Activated CD8-positive, alpha-beta T cell treated with anti-CD3 and anti-CD28 coated beads, Interleukin-2, amount 10 ng/mL, durations not matched to agents 7 days and 5 days (primary cell): ENCODE measurements at regions of chr17 and their contacts with region 1.

Region 1: DNA sequence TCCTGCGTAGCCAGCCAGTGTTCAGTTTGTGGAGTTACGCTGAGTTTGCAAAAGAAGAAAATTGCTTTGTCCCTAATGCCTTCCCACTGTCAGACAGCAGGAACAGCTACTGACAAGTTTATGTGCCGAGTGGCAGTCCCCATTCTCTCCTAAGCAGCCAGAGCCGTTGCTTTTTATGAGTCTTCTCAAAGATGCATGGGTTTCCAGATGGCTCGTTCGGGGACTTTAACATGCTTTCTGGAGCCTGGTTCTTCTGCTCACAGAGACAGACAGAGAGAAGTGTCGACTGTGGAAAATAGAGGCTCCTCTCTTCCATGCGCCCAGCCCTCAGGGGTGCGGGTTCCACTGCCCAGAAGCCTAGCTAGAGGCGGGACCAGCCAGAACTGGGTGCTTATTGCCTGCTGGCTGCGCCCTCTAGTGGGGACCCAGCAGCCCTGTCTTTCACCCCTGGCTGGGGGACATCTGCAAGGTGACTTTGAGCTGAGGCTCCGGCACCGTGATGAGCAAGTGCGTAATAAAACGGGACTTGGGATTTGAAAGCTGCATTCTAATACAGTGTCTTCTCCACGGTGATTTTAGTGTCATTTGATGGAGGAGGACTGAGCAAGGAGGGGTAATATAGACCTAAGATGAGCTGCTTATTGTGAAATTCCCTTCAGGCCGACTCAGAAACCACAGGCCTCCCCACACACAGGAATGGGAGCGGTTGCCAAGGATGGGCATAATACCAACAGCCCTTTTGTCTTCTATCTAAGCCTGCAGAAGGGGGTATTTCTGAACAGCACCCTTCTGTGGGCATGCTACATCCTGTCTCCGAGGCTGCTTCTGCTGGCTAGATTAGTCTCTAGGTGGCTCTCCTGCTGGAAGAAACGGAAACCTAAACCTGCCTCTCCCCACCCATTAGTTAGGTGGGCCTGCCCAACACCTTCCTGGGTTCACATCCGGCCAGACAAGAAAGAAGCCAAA is 73.1 kb downstream of the CCDC182 start:
- DNase-seq: peak; percentile 87
- ATAC-seq: peak; percentile 93
- H3K4me3 Mint-ChIP-seq: peak overlapping the region; percentile 66
- H3K27ac Mint-ChIP-seq: peak overlapping the region; percentile 96
- H3K4me1 Mint-ChIP-seq: peaks cover 66% of the 10 kb centered on the region
- H3K27me3 Mint-ChIP-seq: no peaks in the 10 kb centered on the region

Region 2: DNA sequence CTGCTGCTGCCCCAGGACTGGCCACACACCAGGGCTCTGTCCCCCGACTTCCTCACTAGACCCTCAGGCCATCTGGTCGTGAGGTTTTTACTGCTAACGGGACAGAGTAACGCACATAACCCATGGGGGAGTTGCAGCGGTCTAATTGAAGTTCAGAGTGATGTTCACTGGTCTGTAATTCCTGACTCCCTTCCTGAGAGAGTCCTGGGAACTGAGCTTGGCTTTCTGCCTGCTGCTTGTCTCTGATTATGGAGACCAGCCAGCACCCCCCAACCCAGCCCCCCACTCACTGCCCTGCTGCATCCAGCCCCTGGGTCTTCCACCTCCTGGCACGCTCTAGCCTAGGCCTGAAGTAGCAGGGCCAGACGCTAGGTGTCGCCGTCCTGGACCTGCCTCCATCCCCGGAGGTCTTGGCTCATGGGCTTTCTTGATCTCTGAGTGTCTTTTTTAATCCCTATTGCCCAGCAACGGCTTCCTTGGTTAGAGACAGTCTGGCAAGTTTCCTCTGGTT is 119.8 kb before region 1 on chr17:
- CTCF ChIA-PET with region 1: interaction called, 32 read pairs
- POLR2A ChIA-PET with region 1: no interaction called
- DNase-seq: peak; percentile 51
- ATAC-seq: peak; percentile 49
- H3K4me3 Mint-ChIP-seq: no peak overlapping the region
- H3K27ac Mint-ChIP-seq: peak overlapping the region; percentile 9
- H3K4me1 Mint-ChIP-seq: peaks cover 33% of the 10 kb centered on the region
- H3K27me3 Mint-ChIP-seq: no peaks in the 10 kb centered on the region

Region 3: GRCh38 chr17:57641761-57642160 is 30.2 kb before region 1 on chr17:
- CTCF ChIA-PET with region 1: interaction called, 14 read pairs
- POLR2A ChIA-PET with region 1: no interaction called
- DNase-seq: no peak
- ATAC-seq: no peak
- H3K4me3 Mint-ChIP-seq: no peak overlapping the region
- H3K27ac Mint-ChIP-seq: no peak overlapping the region
- H3K4me1 Mint-ChIP-seq: peaks cover 11% of the 10 kb centered on the region
- H3K27me3 Mint-ChIP-seq: no peaks in the 10 kb centered on the region

Region 4: GRCh38 chr17:57696050-57696449 is 24.1 kb after region 1 on chr17:
- CTCF ChIA-PET with region 1: interaction called, 15 read pairs
- POLR2A ChIA-PET with region 1: no interaction called
- DNase-seq: no peak
- ATAC-seq: no peak
- H3K4me3 Mint-ChIP-seq: no peak overlapping the region
- H3K27ac Mint-ChIP-seq: no peak overlapping the region
- H3K4me1 Mint-ChIP-seq: peaks cover 18% of the 10 kb centered on the region
- H3K27me3 Mint-ChIP-seq: no peaks in the 10 kb centered on the region

Region 5: GRCh38 chr17:57718878-57719277 is 46.9 kb after region 1 on chr17:
- CTCF ChIA-PET with region 1: no interaction called
- POLR2A ChIA-PET with region 1: no interaction called
- DNase-seq: no peak
- ATAC-seq: no peak
- H3K4me3 Mint-ChIP-seq: no peak overlapping the region
- H3K27ac Mint-ChIP-seq: no peak overlapping the region
- H3K4me1 Mint-ChIP-seq: peaks cover 6% of the 10 kb centered on the region
- H3K27me3 Mint-ChIP-seq: peaks cover 25% of the 10 kb centered on the region

Region 6: DNA sequence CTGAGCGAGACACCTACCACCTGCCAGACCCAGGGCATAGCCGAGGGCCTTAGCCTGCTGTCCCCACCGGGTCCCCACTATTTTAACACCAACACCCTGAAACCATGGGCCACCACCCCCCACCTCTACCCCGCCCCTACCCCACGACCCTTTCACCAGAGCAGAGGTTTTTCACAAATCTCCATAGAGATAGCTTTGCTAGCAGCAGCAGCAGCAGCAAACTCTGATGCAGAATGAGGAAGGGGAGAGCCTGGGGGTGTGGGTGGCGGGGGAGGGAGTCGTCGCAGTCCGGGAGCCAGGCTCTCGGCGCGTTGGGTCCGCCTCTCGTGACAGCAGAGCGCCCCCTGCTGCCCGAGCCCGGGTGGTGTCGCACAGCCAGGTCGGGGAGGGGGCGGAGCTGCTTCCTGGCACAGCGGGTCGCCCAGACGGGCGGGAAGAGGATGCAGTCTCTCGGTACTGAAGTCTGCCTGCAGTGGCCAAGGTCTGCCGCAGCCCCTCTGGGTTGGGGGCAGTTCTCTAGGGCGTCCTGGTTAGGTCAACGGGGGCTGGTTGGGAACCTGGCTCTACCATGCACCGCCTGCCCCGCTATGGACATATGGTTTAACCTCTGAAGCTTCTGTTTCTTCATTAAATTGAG is 111.3 kb after region 1 on chr17:
- CTCF ChIA-PET with region 1: interaction called, 10 read pairs
- POLR2A ChIA-PET with region 1: no interaction called
- DNase-seq: peak; percentile 86
- ATAC-seq: peak; percentile 97
- H3K4me3 Mint-ChIP-seq: no peak overlapping the region
- H3K27ac Mint-ChIP-seq: no peak overlapping the region
- H3K4me1 Mint-ChIP-seq: no peaks in the 10 kb centered on the region
- H3K27me3 Mint-ChIP-seq: peaks cover 22% of the 10 kb centered on the region